Activated CD8-positive, alpha-beta T cell treated with anti-CD3 and anti-CD28 coated beads for 36 hours (primary cell): ENCODE measurements at regions of chr17 and their contacts with region 1.

Region 1: DNA sequence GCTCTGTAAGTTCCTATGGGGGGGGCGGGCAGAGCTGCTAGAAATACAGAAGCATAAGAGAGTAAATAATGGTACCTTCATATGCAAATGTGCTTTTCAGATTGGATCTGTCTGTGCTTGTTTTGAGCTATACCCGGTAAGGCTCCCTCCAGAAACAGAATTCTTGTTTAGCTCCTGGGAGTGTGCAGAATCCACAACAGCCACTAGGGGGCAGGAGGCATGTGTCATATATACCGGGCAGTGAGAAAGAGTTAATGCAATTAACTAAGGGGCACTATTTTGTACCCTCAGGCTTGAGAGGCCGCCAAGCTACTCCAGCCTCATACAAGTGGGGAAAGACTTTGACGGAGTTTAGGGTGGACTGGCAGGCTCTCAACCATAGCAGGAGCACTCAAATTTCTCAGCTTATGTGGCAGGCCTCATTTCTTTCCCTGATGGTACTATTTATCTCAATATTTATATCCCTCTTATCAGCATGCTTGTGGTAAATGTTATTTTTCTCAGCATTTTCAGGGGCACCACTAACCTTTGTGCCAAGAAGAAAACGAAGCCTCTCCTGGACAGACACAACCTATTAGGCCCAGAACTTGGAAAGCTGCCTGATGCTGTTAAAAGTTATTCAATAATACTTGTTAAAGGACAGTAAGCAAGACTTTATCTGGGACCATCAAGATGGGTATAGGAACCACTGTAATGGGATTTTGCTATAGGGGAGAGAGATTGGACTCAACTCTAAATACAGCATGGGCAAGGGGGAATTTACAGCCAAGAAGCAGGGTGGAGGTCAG is 10.7 kb upstream of the CENPV start:
- DNase-seq: peak; percentile 93
- ATAC-seq: peak; percentile 98
- H3K4me3 Mint-ChIP-seq: no peak overlapping the region
- H3K27ac Mint-ChIP-seq: no peak overlapping the region
- H3K4me1 Mint-ChIP-seq: peaks cover 8% of the 10 kb centered on the region
- H3K27me3 Mint-ChIP-seq: no peaks in the 10 kb centered on the region
- CTCF ChIP-seq: peak; percentile 91

Region 2: GRCh38 chr17:16345565-16345964 is 18.4 kb before region 1 on chr17:
- CTCF ChIA-PET with region 1: interaction called, 69 read pairs
- POLR2A ChIA-PET with region 1: no interaction called
- intact Hi-C with region 1: no loop called
- DNase-seq: no peak
- ATAC-seq: no peak
- H3K4me3 Mint-ChIP-seq: no peak overlapping the region
- H3K27ac Mint-ChIP-seq: no peak overlapping the region
- H3K4me1 Mint-ChIP-seq: peaks cover 8% of the 10 kb centered on the region
- H3K27me3 Mint-ChIP-seq: no peaks in the 10 kb centered on the region
- CTCF ChIP-seq: no peak

Region 3: GRCh38 chr17:16380640-16381495 is 16.9 kb after region 1 on chr17 and contains the start of gene UBB:
- CTCF ChIA-PET with region 1: interaction called, 40 read pairs
- POLR2A ChIA-PET with region 1: interaction called, 8 read pairs
- intact Hi-C with region 1: no loop called
- DNase-seq: peak; percentile 97
- ATAC-seq: peak; percentile 95
- H3K4me3 Mint-ChIP-seq: peak within 1 kb of the TSS; percentile 94
- H3K27ac Mint-ChIP-seq: peak within 1 kb of the TSS; percentile 95
- H3K4me1 Mint-ChIP-seq: peaks cover 33% of the 10 kb centered on the region
- H3K27me3 Mint-ChIP-seq: no peaks in the 10 kb centered on the region
- CTCF ChIP-seq: no peak
- total RNA-seq, gene UBB: 1,334 to 1,337 TPM

Region 4: DNA sequence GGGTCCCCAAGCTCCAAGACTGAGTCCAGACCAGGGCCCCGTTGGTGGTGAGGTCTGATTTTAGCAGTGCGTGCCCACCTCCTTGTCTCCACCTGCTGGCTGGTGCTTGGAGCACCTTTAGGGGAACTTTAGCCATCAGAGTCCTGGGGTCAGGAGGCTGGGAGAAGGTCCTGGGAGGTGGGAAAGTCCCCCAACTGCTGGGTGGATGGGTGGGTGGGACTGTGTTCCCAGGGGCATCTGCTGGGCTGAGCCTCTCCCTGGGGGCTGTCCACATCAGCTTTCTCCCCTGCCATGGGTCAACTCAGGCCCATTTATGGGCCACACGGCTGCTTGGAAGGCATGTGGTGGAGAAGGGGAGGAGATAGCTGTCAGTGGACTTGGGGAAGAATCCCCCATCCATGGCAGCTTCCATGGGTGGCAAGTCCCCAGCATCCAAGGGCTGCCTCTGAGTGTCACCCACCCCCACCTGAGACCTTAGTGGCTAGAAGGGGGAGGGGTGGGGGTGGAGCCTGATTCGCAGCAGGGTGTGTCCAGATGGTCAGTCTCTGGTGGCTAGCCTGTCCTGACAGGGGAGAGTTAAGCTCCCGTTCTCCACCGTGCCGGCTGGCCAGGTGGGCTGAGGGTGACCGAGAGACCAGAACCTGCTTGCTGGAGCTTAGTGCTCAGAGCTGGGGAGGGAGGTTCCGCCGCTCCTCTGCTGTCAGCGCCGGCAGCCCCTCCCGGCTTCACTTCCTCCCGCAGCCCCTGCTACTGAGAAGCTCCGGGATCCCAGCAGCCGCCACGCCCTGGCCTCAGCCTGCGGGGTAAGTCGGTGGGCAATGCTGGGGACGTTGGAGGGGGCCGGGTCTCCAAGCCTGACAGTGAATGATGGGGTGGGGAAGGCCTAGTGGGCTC is 51.3 kb after region 1 on chr17 and contains the start of gene TRPV2:
- CTCF ChIA-PET with region 1: interaction called, 98 read pairs
- POLR2A ChIA-PET with region 1: interaction called, 4 read pairs
- intact Hi-C with region 1: loop called (anchors 2 kb)
- DNase-seq: peak; percentile 79
- ATAC-seq: peak; percentile 19
- H3K4me3 Mint-ChIP-seq: peak within 1 kb of the TSS; percentile 100
- H3K27ac Mint-ChIP-seq: peak within 1 kb of the TSS; percentile 99
- H3K4me1 Mint-ChIP-seq: peaks cover 49% of the 10 kb centered on the region
- H3K27me3 Mint-ChIP-seq: no peaks in the 10 kb centered on the region
- CTCF ChIP-seq: peak; percentile 65
- total RNA-seq, gene TRPV2: 44.6 to 47.6 TPM

Region 5: DNA sequence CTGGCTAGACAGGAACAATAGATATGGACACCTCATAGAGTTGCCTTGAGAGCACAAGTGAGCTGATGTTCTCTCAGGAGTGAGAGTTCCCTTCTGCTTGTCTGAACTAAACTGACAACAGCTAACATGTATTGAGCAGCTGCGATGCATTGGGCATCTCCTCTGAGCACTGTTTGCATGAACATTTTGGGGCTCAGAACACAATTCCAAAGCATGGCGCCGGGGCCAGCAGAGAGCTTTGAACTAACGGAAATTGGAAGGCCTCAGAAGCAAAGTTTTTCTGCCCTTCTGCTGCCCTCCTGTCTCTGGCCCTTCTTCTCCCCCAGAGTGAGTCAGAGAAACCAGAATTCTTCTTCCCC is 89.5 kb after region 1 on chr17:
- CTCF ChIA-PET with region 1: interaction called, 15 read pairs
- POLR2A ChIA-PET with region 1: no interaction called
- intact Hi-C with region 1: no loop called
- DNase-seq: no peak
- ATAC-seq: no peak
- H3K4me3 Mint-ChIP-seq: no peak overlapping the region
- H3K27ac Mint-ChIP-seq: no peak overlapping the region
- H3K4me1 Mint-ChIP-seq: peaks cover 16% of the 10 kb centered on the region
- H3K27me3 Mint-ChIP-seq: no peaks in the 10 kb centered on the region
- CTCF ChIP-seq: peak; percentile 13